Lower leg skin (tissue), 4 donors: ENCODE measurements at regions of chr2 and their contacts with region 1.

Region 1: GRCh38 chr2:98606431-98606830 is 1.9 kb downstream of the COA5 start:
- DNase-seq: no peak
- H3K4me3 ChIP-seq: no peak overlapping the region
- CTCF ChIP-seq: no peak
- POLR2A ChIP-seq: no peak

Region 2: DNA sequence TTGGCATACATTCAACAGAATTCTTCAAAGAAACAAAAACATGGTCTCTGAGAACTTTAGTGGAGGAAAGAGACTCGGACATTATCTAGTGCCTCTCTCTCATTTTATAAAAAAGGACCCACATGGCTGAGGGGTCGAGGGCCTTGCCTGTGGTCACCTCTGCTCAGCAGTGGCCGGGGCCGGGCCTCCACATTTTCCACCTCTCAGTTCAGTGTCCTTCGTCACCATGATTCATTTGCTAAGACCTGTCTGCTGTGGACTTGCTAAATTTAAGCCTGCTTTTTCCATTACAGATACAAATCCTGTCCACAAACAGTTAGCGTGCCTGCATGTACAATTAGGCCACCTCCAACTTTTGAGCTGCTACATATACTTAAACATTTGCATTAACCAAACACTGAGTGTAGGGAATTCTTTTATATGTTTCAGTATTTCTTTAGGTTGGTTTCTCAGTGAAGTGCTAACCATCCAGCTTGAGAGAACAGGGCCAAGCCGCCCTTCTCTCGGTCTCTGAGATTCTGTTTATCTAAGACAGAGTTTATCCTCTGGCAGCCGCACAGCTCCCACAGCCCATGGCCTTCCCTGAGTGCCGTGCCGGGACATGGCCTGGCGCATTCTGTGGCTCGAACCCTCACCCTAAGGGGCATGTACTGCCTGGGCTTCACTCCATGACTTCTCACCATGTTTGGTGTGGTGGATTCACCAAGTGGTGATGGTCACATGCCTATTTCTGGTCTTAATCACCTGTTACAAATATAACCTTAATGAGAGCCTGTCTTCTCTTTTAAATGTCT is 44.3 kb before region 1 on chr2:
- intact Hi-C with region 1: loop called (anchors 1 kb)
- DNase-seq: no peak
- H3K4me3 ChIP-seq: no peak overlapping the region
- CTCF ChIP-seq: no peak
- POLR2A ChIP-seq: no peak

Region 3: GRCh38 chr2:99380376-99381010 is 774.1 kb after region 1 on chr2:
- intact Hi-C with region 1: no loop called
- DNase-seq: no peak
- H3K4me3 ChIP-seq: no peak overlapping the region
- CTCF ChIP-seq: no peak
- POLR2A ChIP-seq: no peak